Aorta (tissue), 5 donors: ENCODE measurements at regions of chr6 and their contacts with region 1.

Region 1: GRCh38 chr6:124854338-124854922 is 107.8 kb upstream of the RNF217 start:
- DNase-seq: no peak
- ATAC-seq: no peak
- H3K4me3 ChIP-seq: no peak overlapping the region
- H3K27ac ChIP-seq: no peak overlapping the region
- H3K4me1 ChIP-seq: no peaks in the 10 kb centered on the region
- H3K27me3 ChIP-seq: no peaks in the 10 kb centered on the region

Region 2: GRCh38 chr6:123802697-123803496 is 1051.5 kb before region 1 on chr6:
- intact Hi-C with region 1: loop called (anchors 10 kb)
- DNase-seq: peak; percentile 65 to 91
- ATAC-seq: peak; percentile 94
- H3K4me3 ChIP-seq: peak overlapping the region; percentile 0 to 51
- H3K27ac ChIP-seq: no peak overlapping the region
- H3K4me1 ChIP-seq: no peaks in the 10 kb centered on the region
- H3K27me3 ChIP-seq: peaks cover 0 to 2% of the 10 kb centered on the region in 2 donors

Region 3: GRCh38 chr6:124368131-124368530 is 486.3 kb before region 1 on chr6:
- intact Hi-C with region 1: no loop called
- DNase-seq: no peak
- ATAC-seq: no peak
- H3K4me3 ChIP-seq: no peak overlapping the region
- H3K27ac ChIP-seq: no peak overlapping the region
- H3K4me1 ChIP-seq: no peaks in the 10 kb centered on the region
- H3K27me3 ChIP-seq: no peaks in the 10 kb centered on the region